ENCODE measurements at regions of chr11 and their contacts with region 1.

Region 1: GRCh38 chr11:2202055-2202899 is 30.7 kb upstream of the TH start:
- DNase-seq: peak; percentile 84 to 91
- H3K4me3 ChIP-seq: no peak overlapping the region
- H3K27ac ChIP-seq: peak overlapping the region; percentile 32; the same call in 1 of the 2 replicates
- H3K4me1 ChIP-seq: peaks cover 23% of the 10 kb centered on the region
- H3K27me3 ChIP-seq: no peaks in the 10 kb centered on the region
- CTCF ChIP-seq: no peak

Region 2: DNA sequence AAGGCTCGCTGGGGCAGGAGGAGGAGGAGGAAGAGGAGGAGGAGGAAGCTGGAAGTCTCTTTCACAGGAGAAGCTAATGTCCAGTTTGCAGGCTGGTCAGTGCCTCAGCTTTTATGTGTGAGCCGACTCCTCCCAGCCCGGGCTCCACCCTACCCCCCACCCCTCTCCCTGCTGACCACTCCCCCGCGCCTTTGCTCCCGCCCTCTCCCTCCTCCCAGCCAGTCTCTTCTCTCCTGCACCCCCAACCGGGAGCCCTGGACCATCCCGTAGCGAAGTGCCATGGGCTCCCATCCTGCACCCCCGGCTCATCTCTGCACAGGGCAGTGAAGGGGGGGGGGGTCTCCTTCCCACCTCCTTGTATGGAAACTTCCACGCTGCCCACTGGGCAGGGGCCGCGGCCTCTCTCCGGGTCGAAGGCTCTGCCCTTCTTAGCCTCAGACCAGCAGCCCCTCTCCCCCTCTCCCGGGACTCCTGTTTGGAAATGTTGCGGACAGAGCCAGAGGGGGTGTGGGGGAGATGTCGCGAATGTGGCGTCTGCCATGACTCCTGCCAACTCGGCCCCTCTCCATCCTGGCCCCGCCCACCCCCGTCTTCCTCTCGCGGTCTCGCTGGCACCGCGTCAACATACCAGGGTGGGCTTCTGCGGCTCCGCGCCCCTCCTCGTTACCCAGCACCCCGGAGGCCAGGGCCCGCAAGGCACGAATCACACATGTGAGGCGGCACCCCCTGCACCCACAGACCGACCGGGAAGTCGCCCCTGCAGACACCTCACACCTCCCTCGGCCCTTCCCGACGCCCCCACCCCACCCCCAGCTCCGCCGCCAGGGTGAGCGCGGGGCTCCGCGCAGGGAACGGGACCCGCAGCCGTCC is 64.8 kb before region 1 on chr11:
- CTCF ChIA-PET with region 1: no interaction called
- POLR2A ChIA-PET with region 1: no interaction called
- intact Hi-C with region 1: no loop called
- DNase-seq: peak in 1 of 2 experiments; percentile 12
- H3K4me3 ChIP-seq: no peak overlapping the region
- H3K27ac ChIP-seq: no peak overlapping the region
- H3K4me1 ChIP-seq: peaks cover 7% of the 10 kb centered on the region
- H3K27me3 ChIP-seq: peaks cover 14% of the 10 kb centered on the region
- CTCF ChIP-seq: no peak

Region 3: DNA sequence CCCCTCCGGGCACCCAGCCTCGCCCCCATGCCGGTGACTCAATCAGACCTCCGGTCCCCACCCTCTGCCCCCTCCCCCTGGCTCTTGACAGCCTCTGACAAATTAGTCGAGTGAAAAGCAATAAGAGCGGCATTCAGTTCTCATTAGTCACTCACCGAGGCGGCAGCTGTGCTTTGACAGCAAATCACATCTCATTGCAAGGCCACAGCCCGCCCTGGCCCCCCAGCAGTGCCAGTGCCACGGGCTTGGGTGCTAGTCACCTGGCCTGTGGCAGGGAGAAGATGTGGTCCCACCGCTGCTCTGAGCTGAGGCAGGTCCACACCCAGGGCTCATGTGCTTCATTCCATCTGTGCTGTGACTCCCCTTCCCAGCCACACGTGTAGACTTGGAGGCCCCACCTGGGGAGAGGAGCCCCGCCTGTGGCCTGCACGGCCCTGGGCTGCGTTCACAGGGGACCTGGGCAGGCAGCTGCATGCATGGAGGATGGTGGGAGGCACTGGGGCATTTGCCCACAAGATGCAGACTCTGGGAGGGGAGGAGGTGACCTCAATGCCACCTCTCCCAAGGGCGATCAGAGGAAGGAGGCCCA is 23.3 kb before region 1 on chr11:
- CTCF ChIA-PET with region 1: no interaction called
- POLR2A ChIA-PET with region 1: no interaction called
- intact Hi-C with region 1: no loop called
- DNase-seq: peak; percentile 87 to 93
- H3K4me3 ChIP-seq: no peak overlapping the region; the same call in 1 of the 2 replicates
- H3K27ac ChIP-seq: peak overlapping the region; percentile 89
- H3K4me1 ChIP-seq: peaks cover 48% of the 10 kb centered on the region
- H3K27me3 ChIP-seq: no peaks in the 10 kb centered on the region
- CTCF ChIP-seq: no peak

Region 4: DNA sequence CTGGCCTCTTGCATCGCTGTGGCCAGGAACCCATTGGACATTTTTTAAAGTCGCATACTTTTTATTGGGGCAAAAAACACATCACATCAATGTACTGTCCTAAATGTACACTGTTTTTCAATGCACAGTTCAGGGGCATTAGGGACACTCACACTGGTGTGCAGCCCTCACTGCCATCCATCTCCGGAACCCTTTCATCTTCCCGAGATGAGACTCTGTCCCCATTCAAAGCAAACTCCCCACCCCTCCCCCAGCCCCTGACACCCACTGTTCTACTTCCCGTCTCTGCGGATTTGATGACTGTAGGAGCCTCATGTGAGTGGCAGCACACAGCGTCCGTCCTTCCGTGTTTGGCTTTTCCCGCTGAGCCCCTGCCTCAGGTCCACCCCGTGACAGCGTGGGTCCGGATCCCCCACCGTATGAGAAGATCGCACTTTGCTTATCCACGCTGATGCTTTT is 11.1 kb after region 1 on chr11:
- CTCF ChIA-PET with region 1: no interaction called
- POLR2A ChIA-PET with region 1: no interaction called
- intact Hi-C with region 1: no loop called
- DNase-seq: no peak
- H3K4me3 ChIP-seq: no peak overlapping the region
- H3K27ac ChIP-seq: no peak overlapping the region
- H3K4me1 ChIP-seq: no peaks in the 10 kb centered on the region
- H3K27me3 ChIP-seq: no peaks in the 10 kb centered on the region
- CTCF ChIP-seq: no peak

Region 5: DNA sequence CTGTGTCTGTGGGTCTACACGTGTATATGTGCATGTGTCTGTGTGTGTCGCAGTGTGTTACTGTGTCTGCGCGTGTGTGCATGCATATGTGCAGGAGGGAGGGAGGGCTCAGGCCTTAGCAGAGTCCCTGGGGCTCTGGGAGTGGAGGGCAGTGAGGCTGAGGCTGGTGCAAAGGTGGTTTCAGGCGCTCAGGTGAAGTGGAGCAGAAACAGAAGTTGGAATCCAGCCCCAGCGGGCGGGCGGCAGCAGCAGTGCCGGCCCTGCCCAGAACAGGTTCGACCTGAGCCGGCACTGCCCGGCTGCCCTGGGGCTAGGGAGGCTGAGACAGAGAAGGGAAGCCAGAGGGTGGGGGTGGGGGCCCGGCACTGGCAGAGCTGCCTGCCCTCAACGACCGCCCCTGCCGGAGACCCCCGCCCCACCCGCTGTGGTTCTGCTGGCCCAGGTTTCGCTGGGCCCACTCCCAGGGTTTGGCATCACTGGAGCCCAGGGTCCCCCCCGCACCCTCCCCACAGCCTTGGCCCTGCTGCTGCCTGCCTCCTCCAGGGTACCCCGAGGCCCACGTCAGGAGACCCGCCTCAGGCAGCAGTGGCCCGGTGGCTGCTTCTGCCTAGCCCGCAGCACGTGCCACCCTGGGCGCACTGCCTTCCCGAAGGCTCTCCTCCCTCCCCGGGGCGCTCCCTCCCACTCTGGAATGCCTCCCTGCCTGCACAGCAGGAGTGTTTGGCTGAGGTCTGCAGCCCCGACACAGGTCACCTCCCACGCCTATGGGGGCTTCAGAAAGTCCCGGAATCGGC is 54.8 kb after region 1 on chr11:
- CTCF ChIA-PET with region 1: no interaction called
- POLR2A ChIA-PET with region 1: no interaction called
- intact Hi-C with region 1: loop called (anchors 1 kb)
- DNase-seq: peak; percentile 78 to 85
- H3K4me3 ChIP-seq: peak overlapping the region; percentile 29; the same call in 1 of the 2 replicates
- H3K27ac ChIP-seq: peak overlapping the region; percentile 57
- H3K4me1 ChIP-seq: peaks cover 13% of the 10 kb centered on the region
- H3K27me3 ChIP-seq: no peaks in the 10 kb centered on the region
- CTCF ChIP-seq: no peak

Region 6: GRCh38 chr11:2269601-2270321 is 67.5 kb after region 1 on chr11:
- CTCF ChIA-PET with region 1: no interaction called
- POLR2A ChIA-PET with region 1: no interaction called
- intact Hi-C with region 1: loop called (anchors 2 kb)
- DNase-seq: no peak
- H3K4me3 ChIP-seq: peak overlapping the region; percentile 56
- H3K27ac ChIP-seq: no peak overlapping the region
- H3K4me1 ChIP-seq: 0 out of 2 replicates have a peak, but pooled peaks cover 6% of the 10 kb centered on the region
- H3K27me3 ChIP-seq: no peaks in the 10 kb centered on the region
- CTCF ChIP-seq: no peak

Measured in PC-9 (cell line).